ENCODE measurements at regions of chr11 and their contacts with region 1.

Region 1: GRCh38 chr11:47213985-47214564 is 699 bp upstream of the DDB2 start:
- DNase-seq: peak; percentile 84 to 89 (median 84)
- H3K4me3 ChIP-seq: peak overlapping the region; percentile 79 to 99 (median 81)
- H3K4me3 Mint-ChIP-seq: peak overlapping the region; percentile 98 to 100
- H3K27ac ChIP-seq: peak overlapping the region; percentile 90 to 93
- H3K27ac Mint-ChIP-seq: peak overlapping the region; percentile 97 to 100 (median 100)
- H3K4me1 ChIP-seq: peaks cover 15 to 29% of the 10 kb centered on the region in 2 donors
- H3K4me1 Mint-ChIP-seq: peaks cover 23% of the 10 kb centered on the region
- H3K27me3 ChIP-seq: no peaks in the 10 kb centered on the region
- H3K27me3 Mint-ChIP-seq: peaks cover 0 to 2% (median 0%) of the 10 kb centered on the region in 3 donors
- CTCF ChIP-seq: no peak

Region 2: DNA sequence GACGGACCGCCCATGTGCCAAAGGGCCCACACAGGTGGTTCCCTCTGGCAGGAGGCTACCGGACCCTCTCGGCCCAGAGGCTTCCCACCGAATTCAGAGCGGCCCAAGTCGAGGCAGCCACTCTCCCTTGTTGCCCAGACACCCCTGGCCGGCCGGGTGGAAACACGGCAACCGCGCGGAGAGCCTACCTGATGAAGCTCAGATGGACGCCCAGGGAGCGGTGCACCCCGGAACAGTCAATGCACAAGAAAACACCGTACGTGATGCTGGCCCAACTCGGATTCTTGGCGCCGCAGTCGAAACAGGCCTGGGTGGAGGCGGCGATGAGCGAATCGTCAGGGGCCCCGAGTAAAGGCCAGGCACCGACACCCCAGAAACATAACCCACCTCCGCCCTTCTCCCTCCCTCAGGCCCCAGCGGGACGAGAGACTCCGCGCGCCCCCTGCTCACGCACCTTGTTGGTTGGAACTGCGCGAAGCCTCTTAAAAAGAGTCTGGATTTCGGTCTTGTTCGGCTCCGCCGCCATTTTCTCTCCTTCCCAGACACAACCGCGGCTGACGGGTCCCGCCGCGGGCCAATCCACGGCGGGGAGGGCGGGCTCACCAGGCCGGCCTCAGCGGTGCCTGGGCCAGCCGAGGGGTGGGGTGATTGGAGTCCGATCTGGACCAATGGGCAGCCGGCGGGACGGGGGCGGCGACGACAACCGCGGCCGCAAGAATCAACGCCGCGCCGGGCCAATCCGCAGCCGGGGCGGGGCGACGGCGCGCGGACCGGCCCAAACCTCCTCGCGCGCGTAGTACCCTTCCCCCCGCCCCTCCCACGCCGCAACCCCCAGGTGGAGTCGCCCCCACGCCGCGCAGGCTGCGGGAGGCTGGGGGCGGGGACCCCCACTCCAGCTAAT is 37.5 kb before region 1 on chr11 and contains the start of gene ARFGAP2:
- intact Hi-C with region 1: loop called (anchors 5 kb)
- DNase-seq: peak; percentile 93 to 96 (median 94)
- H3K4me3 ChIP-seq: peak within 1 kb of the TSS; percentile 77 to 94 (median 93)
- H3K4me3 Mint-ChIP-seq: peak within 1 kb of the TSS; percentile 95 to 98
- H3K27ac ChIP-seq: peak within 1 kb of the TSS; percentile 90 to 95
- H3K27ac Mint-ChIP-seq: peak within 1 kb of the TSS; percentile 96 to 99 (median 98)
- H3K4me1 ChIP-seq: peaks cover 24 to 29% of the 10 kb centered on the region in 2 donors
- H3K4me1 Mint-ChIP-seq: peaks cover 22% of the 10 kb centered on the region
- H3K27me3 ChIP-seq: no peaks in the 10 kb centered on the region
- H3K27me3 Mint-ChIP-seq: peaks cover 0 to 2% (median 1%) of the 10 kb centered on the region in 3 donors
- CTCF ChIP-seq: no peak
- polyA plus RNA-seq, gene ARFGAP2: 59.7 to 129 (median 61.0) TPM

Region 3: GRCh38 chr11:47254386-47254785 is 40.3 kb after region 1 on chr11:
- intact Hi-C with region 1: loop called in 1 of 2 experiments (anchors 5 kb)
- DNase-seq: peak; percentile 53 to 92 (median 73)
- H3K4me3 ChIP-seq: peak overlapping the region in 1 of 3 experiments; percentile 45
- H3K4me3 Mint-ChIP-seq: peak overlapping the region; percentile 26 to 79
- H3K27ac ChIP-seq: peak overlapping the region; percentile 77 to 82
- H3K27ac Mint-ChIP-seq: peak overlapping the region; percentile 83 to 94 (median 88)
- H3K4me1 ChIP-seq: peaks cover 39 to 49% of the 10 kb centered on the region in 2 donors
- H3K4me1 Mint-ChIP-seq: peaks cover 44% of the 10 kb centered on the region
- H3K27me3 ChIP-seq: no peaks in the 10 kb centered on the region
- H3K27me3 Mint-ChIP-seq: no peaks in the 10 kb centered on the region
- CTCF ChIP-seq: no peak

Region 4: GRCh38 chr11:47565340-47566148 is 351.5 kb after region 1 on chr11 and contains the start of gene PTPMT1:
- intact Hi-C with region 1: no loop called
- DNase-seq: peak in 2 of 3 donors; percentile 34 to 38
- H3K4me3 ChIP-seq: peak within 1 kb of the TSS; percentile 87 to 97 (median 93)
- H3K4me3 Mint-ChIP-seq: peak within 1 kb of the TSS; percentile 85 to 91
- H3K27ac ChIP-seq: peak within 1 kb of the TSS; percentile 84 to 85
- H3K27ac Mint-ChIP-seq: peak within 1 kb of the TSS; percentile 63 to 89 (median 77)
- H3K4me1 ChIP-seq: peaks cover 19 to 26% of the 10 kb centered on the region in 2 donors
- H3K4me1 Mint-ChIP-seq: peaks cover 14% of the 10 kb centered on the region
- H3K27me3 ChIP-seq: no peaks in the 10 kb centered on the region
- H3K27me3 Mint-ChIP-seq: peaks cover 0 to 2% (median 0%) of the 10 kb centered on the region in 3 donors
- CTCF ChIP-seq: no peak
- polyA plus RNA-seq, gene PTPMT1: 39.2 to 87.8 (median 83.3) TPM

Measured in CD14-positive monocyte (primary cell).